Activated CD8-positive, alpha-beta memory T cell treated with anti-CD3 and anti-CD28 coated beads, Interleukin-2, amount 10 ng/mL, durations not matched to agents 7 days and 5 days (primary cell): ENCODE measurements at regions of chr3 and their contacts with region 1.

Region 1: GRCh38 chr3:158790901-158791589 is 10.8 kb upstream of the MFSD1 start:
- DNase-seq: peak; percentile 50
- ATAC-seq: peak; percentile 72
- H3K4me3 Mint-ChIP-seq: peak overlapping the region; percentile 47
- H3K27ac Mint-ChIP-seq: no peak overlapping the region
- H3K4me1 Mint-ChIP-seq: peaks cover 9% of the 10 kb centered on the region
- H3K27me3 Mint-ChIP-seq: peaks cover 5% of the 10 kb centered on the region

Region 2: GRCh38 chr3:158560979-158561378 is 230.1 kb before region 1 on chr3:
- CTCF ChIA-PET with region 1: no interaction called
- DNase-seq: no peak
- ATAC-seq: no peak
- H3K4me3 Mint-ChIP-seq: no peak overlapping the region
- H3K27ac Mint-ChIP-seq: no peak overlapping the region
- H3K4me1 Mint-ChIP-seq: no peaks in the 10 kb centered on the region
- H3K27me3 Mint-ChIP-seq: peaks cover 9% of the 10 kb centered on the region

Region 3: GRCh38 chr3:158801696-158802408 is 10.8 kb after region 1 on chr3 and contains the start of gene MFSD1:
- CTCF ChIA-PET with region 1: interaction called, 16 read pairs
- DNase-seq: peak; percentile 96
- ATAC-seq: peak; percentile 95
- H3K4me3 Mint-ChIP-seq: peak within 1 kb of the TSS; percentile 84
- H3K27ac Mint-ChIP-seq: peak within 1 kb of the TSS; percentile 83
- H3K4me1 Mint-ChIP-seq: peaks cover 22% of the 10 kb centered on the region
- H3K27me3 Mint-ChIP-seq: peaks cover 4% of the 10 kb centered on the region
- total RNA-seq, gene MFSD1: 19.4 to 20.6 TPM

Region 4: DNA sequence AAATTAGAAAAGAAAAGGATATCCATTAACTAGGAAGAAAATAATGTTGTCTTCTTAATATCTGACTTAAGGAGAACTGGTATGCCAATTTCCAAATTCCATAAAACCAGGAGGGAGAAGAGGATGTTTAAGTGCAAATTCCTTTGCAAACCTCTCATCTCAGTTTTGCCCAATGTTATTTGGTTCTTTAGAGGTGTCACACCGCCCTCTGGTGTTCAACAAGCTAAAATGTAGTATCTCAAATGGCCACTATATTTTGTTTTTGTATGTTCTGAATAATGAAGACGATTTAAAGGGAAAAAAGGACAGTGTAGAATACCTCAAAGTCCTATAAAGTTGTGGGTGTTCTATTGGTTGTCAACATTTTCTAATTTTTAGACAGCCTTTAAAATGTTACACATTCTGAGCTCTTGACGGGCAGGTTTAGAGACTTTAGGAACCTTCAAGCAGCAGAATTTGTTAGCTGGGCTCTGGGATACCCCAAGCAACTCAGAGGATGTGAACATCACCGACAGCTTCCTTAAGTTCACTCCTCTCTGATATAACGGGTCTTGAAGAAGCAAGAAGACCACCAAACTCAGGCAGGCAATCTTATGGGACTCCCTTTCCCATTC is 469.1 kb after region 1 on chr3:
- CTCF ChIA-PET with region 1: interaction called, 10 read pairs
- DNase-seq: peak; percentile 47
- ATAC-seq: peak; percentile 39
- H3K4me3 Mint-ChIP-seq: no peak overlapping the region
- H3K27ac Mint-ChIP-seq: no peak overlapping the region
- H3K4me1 Mint-ChIP-seq: no peaks in the 10 kb centered on the region
- H3K27me3 Mint-ChIP-seq: peaks cover 9% of the 10 kb centered on the region